ENCODE measurements at regions of chr16 and their contacts with region 1.

Region 1: DNA sequence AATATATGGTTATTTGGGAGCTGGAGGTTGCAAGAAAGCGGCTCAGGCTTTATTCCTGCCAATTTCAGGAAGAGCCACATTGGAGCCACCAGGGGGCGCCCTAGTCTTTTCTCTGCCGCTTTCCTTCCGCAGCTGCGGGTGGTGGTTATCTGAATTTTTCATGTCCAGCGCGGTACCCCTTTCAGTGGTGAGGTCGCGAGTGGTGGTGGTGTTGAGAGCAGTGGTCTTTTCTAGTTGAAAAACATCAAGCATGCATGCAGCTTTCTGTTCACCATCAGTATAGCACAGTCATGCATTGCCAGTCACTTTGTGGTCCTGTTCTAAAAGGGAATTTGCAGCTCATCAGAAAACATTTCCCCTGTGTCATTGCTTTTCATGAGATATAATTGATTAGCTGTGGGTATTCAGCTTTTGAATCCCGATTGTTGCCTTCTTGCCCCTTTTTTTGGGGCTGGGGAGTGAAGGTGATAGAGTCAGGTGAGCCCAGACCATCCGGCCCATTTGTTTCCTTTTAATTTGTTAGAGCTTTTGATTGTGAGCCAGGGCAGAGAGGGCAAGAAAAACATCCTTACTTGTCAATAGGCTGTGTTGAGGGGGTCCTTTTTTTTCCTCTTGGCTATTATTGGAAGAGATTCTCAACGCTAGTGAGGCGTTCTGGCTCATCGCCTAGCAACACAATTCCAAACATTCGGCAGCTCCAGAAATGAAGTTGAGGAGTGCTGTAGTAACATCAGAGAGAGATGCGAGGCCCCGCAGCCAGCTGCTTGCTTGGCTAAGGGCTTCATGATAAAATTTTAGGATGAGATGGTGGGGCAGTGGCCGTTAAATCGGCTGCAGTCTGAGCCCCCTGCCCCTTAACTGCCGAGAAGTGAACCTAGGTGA is 119.0 kb downstream of the SNX29 start:
- DNase-seq: peak; percentile 72 to 79
- ATAC-seq: peak in 3 of 4 donors; percentile 34 to 78 (median 62)
- H3K4me3 ChIP-seq: peak overlapping the region; percentile 43
- H3K27ac ChIP-seq: no peak overlapping the region
- H3K4me1 ChIP-seq: peaks cover 14% of the 10 kb centered on the region
- H3K27me3 ChIP-seq: no peaks in the 10 kb centered on the region
- CTCF ChIP-seq: peak; percentile 93

Region 2: DNA sequence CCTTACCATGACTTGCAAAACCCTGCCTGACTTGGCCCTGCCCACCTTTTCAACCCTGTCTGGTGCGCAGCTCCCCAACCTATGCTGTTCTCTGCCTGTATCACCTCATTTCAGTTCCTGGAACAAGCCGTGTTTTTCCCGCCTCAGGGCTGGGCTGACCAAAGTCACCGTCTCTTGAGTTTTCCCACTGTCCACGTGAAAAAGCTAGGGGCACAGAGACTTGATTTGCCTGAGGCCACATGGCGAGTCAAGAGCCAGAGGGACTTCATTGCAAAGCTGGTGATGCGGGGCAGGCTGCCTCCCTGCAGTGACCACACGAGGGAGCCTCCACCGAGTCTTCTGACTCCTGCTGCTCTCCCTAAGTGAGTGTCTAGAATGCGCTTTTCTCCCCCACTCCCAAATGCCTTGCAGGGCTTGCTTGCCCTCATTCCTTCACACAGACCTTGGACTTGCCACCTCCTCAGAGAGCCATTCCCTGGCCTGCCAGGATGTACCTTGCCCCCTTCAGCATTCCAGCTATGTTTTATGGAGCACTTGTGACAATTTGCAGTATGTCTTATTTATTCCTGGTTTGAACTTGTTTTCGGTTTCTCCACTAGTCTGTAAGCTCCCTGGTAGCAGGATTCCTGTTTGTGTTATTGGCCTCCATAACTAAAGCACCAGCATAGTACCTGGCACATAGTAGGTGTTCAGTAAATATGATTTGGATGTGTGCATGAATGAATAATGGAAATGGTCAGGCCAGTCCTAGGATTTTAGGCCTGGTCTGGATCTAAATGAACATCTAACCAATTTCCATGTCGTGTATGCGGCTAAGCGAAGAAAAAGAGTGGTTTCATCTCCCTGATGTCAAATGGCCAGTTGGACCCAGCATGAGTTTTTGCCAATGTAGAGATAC is 133.3 kb after region 1 on chr16:
- intact Hi-C with region 1: loop called in 1 of 2 experiments (anchors 5 kb)
- DNase-seq: peak in 1 of 2 donors; percentile 31
- ATAC-seq: peak in 3 of 4 donors; percentile 37 to 55 (median 50)
- H3K4me3 ChIP-seq: no peak overlapping the region
- H3K27ac ChIP-seq: no peak overlapping the region
- H3K4me1 ChIP-seq: no peaks in the 10 kb centered on the region
- H3K27me3 ChIP-seq: no peaks in the 10 kb centered on the region
- CTCF ChIP-seq: peak; percentile 40

Region 3: GRCh38 chr16:12260647-12261262 is 165.2 kb after region 1 on chr16:
- intact Hi-C with region 1: loop called (anchors 5 to 10 kb)
- DNase-seq: no peak
- ATAC-seq: no peak
- H3K4me3 ChIP-seq: no peak overlapping the region
- H3K27ac ChIP-seq: no peak overlapping the region
- H3K4me1 ChIP-seq: peaks cover 9% of the 10 kb centered on the region
- H3K27me3 ChIP-seq: no peaks in the 10 kb centered on the region
- CTCF ChIP-seq: no peak

Region 4: GRCh38 chr16:12268606-12269005 is 173.1 kb after region 1 on chr16:
- intact Hi-C with region 1: loop called (anchors 5 to 10 kb)
- DNase-seq: no peak
- ATAC-seq: no peak
- H3K4me3 ChIP-seq: no peak overlapping the region
- H3K27ac ChIP-seq: no peak overlapping the region
- H3K4me1 ChIP-seq: no peaks in the 10 kb centered on the region
- H3K27me3 ChIP-seq: no peaks in the 10 kb centered on the region
- CTCF ChIP-seq: no peak

Region 5: DNA sequence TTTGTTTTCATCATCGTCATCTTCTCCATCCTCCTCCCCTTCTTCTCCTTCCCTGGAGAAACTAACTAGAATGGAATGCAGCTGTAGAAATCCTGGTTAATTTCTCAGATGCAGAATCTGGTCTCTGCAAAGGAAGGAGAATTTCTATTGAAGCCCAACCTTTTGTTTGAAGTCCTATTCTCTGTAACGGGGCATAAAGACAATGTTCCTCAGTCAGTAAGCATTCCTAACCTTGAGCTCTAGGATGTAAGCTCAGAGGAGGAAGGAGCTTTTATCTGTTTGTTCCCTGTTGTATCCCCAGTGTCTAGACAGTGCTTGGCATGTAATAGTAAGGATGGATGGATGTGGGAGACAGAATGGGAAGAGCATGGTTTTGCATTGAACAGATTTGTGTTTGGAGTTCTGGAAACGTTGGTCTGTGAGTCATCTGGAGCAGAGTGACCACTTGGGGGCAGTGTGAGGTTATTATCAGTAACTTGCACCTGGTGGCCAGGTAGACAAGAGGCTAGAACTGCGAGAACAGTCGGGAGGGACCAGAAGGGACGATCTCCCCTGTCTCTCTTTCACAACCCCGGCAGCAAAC is 244.7 kb after region 1 on chr16:
- intact Hi-C with region 1: loop called (anchors 2 to 10 kb)
- DNase-seq: no peak
- ATAC-seq: no peak
- H3K4me3 ChIP-seq: no peak overlapping the region
- H3K27ac ChIP-seq: no peak overlapping the region
- H3K4me1 ChIP-seq: peaks cover 7% of the 10 kb centered on the region
- H3K27me3 ChIP-seq: no peaks in the 10 kb centered on the region
- CTCF ChIP-seq: peak; percentile 21

Region 6: GRCh38 chr16:12819126-12820117 is 723.9 kb after region 1 on chr16:
- intact Hi-C with region 1: loop called in 1 of 2 experiments (anchors 10 kb)
- DNase-seq: peak; percentile 61 to 71
- ATAC-seq: peak in 2 of 4 donors; percentile 46 to 55
- H3K4me3 ChIP-seq: no peak overlapping the region
- H3K27ac ChIP-seq: no peak overlapping the region
- H3K4me1 ChIP-seq: no peaks in the 10 kb centered on the region
- H3K27me3 ChIP-seq: peaks cover 0 to 2% (median 0%) of the 10 kb centered on the region in 3 donors
- CTCF ChIP-seq: peak; percentile 67

Measured in psoas muscle (tissue), 8 donors.